Left ventricle myocardium superior (tissue), 1 donor: ENCODE measurements at regions of chr2 and their contacts with region 1.

Region 1: DNA sequence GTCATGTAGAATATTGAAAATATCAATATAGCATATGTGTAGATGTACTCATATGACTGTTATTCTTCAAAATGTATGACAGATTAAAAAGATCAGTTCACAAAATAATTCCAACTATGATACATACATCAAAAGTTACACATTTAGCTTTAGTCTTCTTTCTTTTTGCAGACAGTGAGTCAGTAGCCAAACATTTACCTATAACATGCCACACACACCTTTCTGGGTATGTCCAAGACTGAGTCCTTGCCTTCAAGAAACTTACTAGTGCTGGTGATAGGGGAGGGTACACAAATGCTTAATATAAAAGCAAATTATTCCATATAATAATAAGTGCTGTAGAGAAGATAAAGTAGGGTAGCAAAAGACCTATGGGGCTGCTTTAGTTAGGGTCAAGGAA is 152.9 kb upstream of the WDSUB1 start:
- DNase-seq: no peak
- ATAC-seq: no peak

Region 2: GRCh38 chr2:158893026-158893425 is 546.4 kb before region 1 on chr2:
- intact Hi-C with region 1: loop called (anchors 5 kb)
- DNase-seq: no peak
- ATAC-seq: peak; percentile 32

Region 3: GRCh38 chr2:159755788-159756187 is 316.4 kb after region 1 on chr2:
- intact Hi-C with region 1: no loop called
- DNase-seq: no peak
- ATAC-seq: peak; percentile 42

Region 4: GRCh38 chr2:159807183-159808031 is 368.0 kb after region 1 on chr2:
- intact Hi-C with region 1: loop called (anchors 10 kb)
- DNase-seq: no peak
- ATAC-seq: peak; percentile 61